HCT116 (cell line): ENCODE measurements at regions of chr10 and their contacts with region 1.

Region 1: GRCh38 chr10:63866075-63866746 is 345.0 kb downstream of the REEP3 start:
- DNase-seq: peak; percentile 56
- ATAC-seq: peak; percentile 95
- H3K4me3 ChIP-seq: peak overlapping the region in 1 of 2 experiments; percentile 25; a peak in 3 of 4 replicates
- H3K27ac ChIP-seq: no peak overlapping the region
- H3K4me1 ChIP-seq: peaks cover 8 to 14% of the 10 kb centered on the region in 2 experiments; a peak in 3 of 4 replicates
- H3K27me3 ChIP-seq: no peaks in the 10 kb centered on the region
- CTCF ChIP-seq: peak; percentile 63 to 89 (median 86)
- POLR2A ChIP-seq: no peak
- RAD21 ChIP-seq: peak; percentile 76

Region 2: DNA sequence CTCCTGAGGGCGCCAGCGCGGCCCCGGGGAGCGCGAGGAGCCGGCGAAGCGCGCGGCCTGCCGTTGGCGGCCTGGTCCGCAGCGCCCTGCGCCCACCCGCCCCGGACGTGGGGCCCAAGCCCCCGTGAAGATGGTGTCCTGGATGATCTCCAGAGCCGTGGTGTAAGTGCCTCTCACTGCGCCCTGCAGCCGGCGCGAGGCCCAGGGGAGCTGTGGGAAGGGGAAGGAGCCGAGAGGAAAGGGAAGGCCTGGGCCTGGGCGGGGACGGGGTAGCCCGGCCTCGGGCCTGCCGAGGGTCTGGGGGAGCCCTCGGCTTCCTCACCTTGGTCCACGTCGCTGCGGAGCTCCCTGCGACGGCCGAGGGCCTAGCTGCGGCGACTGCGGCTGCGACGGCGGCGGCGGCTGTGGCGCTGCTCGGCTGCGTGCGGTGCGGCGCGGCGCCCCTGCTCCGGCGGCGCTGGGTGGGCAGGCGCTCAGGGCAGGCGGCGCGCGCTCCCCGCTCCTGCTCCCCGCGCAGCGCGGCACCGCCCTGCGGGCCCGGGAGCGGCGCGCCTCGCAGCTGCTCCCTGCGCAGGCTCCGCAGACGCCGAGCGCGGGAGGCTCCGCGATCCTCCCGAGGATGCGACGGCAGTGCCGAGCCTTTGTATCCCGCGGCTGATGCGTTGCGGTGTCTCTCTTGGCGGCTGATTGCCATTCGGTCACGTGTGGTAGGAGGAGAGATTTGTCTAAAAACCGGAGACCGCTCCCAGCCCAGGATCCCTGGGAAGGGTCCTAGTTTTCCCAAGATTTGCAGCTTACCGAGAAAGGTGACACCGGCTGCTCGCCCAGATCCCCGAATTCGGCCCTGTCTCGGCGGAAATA is 344.6 kb before region 1 on chr10:
- CTCF ChIA-PET with region 1: no interaction called
- POLR2A ChIA-PET with region 1: no interaction called
- RAD21 ChIA-PET with region 1: no interaction called
- intact Hi-C with region 1: no loop called
- DNase-seq: no peak
- ATAC-seq: peak; percentile 74
- H3K4me3 ChIP-seq: peak overlapping the region; percentile 55 to 65
- H3K27ac ChIP-seq: peak overlapping the region; percentile 99
- H3K4me1 ChIP-seq: peaks cover 19 to 32% of the 10 kb centered on the region in 2 experiments; a peak in 3 of 4 replicates
- H3K27me3 ChIP-seq: no peaks in the 10 kb centered on the region
- CTCF ChIP-seq: no peak
- POLR2A ChIP-seq: peak; percentile 32
- RAD21 ChIP-seq: 0 out of 2 replicates have a peak, but pooled peaks have one; percentile 17

Region 3: DNA sequence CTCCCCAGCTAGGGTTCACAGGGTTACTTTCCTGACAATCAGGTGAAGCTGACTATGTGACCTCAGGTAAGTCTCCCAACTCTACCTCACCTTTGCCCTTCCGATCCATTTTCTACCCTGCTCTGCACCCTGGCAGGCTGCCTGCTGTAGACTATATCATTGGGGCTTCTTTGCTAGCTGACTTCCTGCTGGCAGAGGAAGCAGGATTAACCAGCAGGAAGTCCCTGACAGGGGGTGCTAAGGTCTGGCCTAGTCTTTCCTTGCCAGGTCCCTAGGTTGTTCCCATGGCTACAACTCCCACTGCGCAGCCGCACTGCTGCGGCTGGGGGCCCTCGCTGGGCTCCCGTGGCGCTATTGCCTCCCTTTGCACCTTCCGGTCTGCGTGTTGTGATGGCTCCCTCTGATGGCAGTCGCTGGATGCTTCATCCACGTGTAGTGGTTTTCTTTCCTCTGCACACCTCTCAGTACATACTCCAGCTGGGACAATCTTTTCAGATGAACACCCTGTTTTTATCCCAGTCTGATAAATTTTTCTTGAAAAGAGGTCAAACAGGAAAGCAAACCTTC is 20.9 kb after region 1 on chr10:
- CTCF ChIA-PET with region 1: interaction called, 23 read pairs
- POLR2A ChIA-PET with region 1: no interaction called
- RAD21 ChIA-PET with region 1: no interaction called
- intact Hi-C with region 1: no loop called
- DNase-seq: peak; percentile 71
- ATAC-seq: peak; percentile 97
- H3K4me3 ChIP-seq: no peak overlapping the region; a peak in 1 of 4 replicates
- H3K27ac ChIP-seq: peak overlapping the region; percentile 16; the same call in 1 of the 2 replicates
- H3K4me1 ChIP-seq: peaks cover 0 to 11% of the 10 kb centered on the region in 2 experiments; a peak in 1 of 4 replicates
- H3K27me3 ChIP-seq: no peaks in the 10 kb centered on the region
- CTCF ChIP-seq: peak; percentile 64 to 84 (median 72); a peak in 5 of 6 replicates
- POLR2A ChIP-seq: no peak
- RAD21 ChIP-seq: peak; percentile 31; the same call in 1 of the 2 replicates

Region 4: DNA sequence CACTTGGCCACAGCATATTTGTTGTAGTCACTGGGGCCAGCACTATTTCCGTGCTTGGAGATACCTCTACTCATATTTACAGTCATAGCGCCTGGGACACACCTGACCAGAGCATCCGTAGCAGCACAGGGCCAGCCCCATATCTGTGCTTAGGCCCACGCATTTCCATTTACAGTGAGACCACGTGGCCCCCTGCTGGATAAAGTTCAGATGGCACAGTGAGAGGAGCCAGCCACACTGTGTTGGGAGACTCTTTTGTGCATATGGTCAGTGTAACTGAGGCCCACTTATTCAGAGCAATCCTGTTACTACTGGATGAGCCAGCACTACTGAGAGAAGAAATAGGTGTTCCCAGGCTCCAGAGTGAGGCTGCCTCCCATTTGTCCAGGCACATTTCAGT is 110.3 kb after region 1 on chr10:
- CTCF ChIA-PET with region 1: interaction called, 90 read pairs
- POLR2A ChIA-PET with region 1: interaction called, 5 read pairs
- RAD21 ChIA-PET with region 1: interaction called, 6 to 7 read pairs
- intact Hi-C with region 1: loop called (anchors 1 kb)
- DNase-seq: peak; percentile 48
- ATAC-seq: peak; percentile 99
- H3K4me3 ChIP-seq: no peak overlapping the region
- H3K27ac ChIP-seq: no peak overlapping the region; the same call in 1 of the 2 replicates
- H3K4me1 ChIP-seq: peaks cover 2 to 6% of the 10 kb centered on the region in 2 experiments; a peak in 2 of 4 replicates
- H3K27me3 ChIP-seq: no peaks in the 10 kb centered on the region
- CTCF ChIP-seq: peak; percentile 77 to 84 (median 81)
- POLR2A ChIP-seq: no peak
- RAD21 ChIP-seq: peak; percentile 76

Region 5: GRCh38 chr10:64041185-64041988 is 175.2 kb after region 1 on chr10:
- CTCF ChIA-PET with region 1: interaction called, 12 read pairs
- POLR2A ChIA-PET with region 1: no interaction called
- RAD21 ChIA-PET with region 1: no interaction called
- intact Hi-C with region 1: loop called (anchors 1 kb)
- DNase-seq: peak; percentile 68
- ATAC-seq: peak; percentile 98
- H3K4me3 ChIP-seq: peak overlapping the region in 1 of 2 experiments; percentile 21; a peak in 1 of 4 replicates
- H3K27ac ChIP-seq: no peak overlapping the region
- H3K4me1 ChIP-seq: peaks cover 0 to 4% of the 10 kb centered on the region in 2 experiments; a peak in 1 of 4 replicates
- H3K27me3 ChIP-seq: no peaks in the 10 kb centered on the region
- CTCF ChIP-seq: peak; percentile 99 to 100 (median 99)
- POLR2A ChIP-seq: no peak
- RAD21 ChIP-seq: peak; percentile 95

Region 6: DNA sequence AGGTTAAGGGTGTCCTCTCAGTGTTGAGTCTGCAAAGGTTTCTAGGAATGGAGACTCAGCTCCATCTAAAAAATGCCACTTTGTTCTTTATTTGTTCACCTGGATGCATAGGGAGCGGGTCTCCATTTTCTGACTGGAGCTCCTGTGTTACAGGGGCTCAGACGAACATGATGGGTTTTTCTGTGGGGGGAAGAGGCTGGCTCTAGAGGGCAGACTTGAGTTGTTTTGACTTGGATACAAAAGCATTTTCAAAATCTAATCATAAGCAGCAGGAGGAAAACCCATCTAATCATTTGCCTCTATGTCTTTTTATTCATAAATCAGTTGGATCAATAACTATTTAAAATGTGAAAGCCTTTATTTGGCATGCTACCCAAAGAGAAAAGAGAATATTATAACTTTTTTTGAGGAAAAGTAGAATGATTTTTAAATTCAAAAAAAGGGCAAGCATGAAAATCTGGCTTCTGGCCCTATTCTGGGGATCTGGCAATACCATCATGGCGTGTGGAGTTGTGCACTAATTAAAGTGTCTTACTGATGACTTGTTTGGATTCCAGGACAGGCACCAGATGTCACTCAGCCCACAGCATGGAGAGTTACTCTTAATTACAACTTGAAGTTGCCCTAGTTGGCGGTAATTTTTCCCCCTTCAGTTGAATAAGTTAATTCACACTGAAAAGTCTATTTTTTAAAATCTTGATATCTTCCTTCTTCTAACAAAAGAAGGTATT is 249.9 kb after region 1 on chr10:
- CTCF ChIA-PET with region 1: no interaction called
- POLR2A ChIA-PET with region 1: no interaction called
- RAD21 ChIA-PET with region 1: no interaction called
- intact Hi-C with region 1: no loop called
- DNase-seq: no peak
- ATAC-seq: peak; percentile 76
- H3K4me3 ChIP-seq: no peak overlapping the region
- H3K27ac ChIP-seq: no peak overlapping the region
- H3K4me1 ChIP-seq: no peaks in the 10 kb centered on the region
- H3K27me3 ChIP-seq: no peaks in the 10 kb centered on the region
- CTCF ChIP-seq: peak; percentile 30 to 67 (median 65); a peak in 5 of 6 replicates
- POLR2A ChIP-seq: no peak
- RAD21 ChIP-seq: peak; percentile 59